ENCODE measurements at regions of chr4 and their contacts with region 1.

Region 1: DNA sequence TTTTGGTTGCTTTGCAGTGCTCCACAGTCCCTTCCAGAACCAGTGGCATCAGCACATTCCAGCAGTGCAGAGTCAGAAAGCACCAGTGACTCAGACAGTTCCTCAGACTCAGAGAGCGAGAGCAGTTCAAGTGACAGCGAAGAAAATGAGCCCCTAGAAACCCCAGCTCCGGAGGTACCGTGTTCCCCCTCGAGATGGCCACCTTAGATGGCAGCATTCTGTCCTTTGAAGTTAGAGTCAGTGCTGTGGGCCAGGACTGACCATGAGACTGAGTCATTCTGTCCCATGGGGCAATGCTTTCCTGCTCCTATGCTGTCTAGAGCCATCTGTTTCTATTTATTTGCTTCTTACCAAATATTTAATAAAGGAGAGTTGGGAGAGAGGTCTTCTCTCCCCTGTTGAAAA is 112.3 kb downstream of the KLHL8 start:
- DNase-seq: peak; percentile 59
- H3K4me3 ChIP-seq: no peak overlapping the region
- H3K27ac ChIP-seq: peak overlapping the region; percentile 18
- H3K4me1 ChIP-seq: peaks cover 27% of the 10 kb centered on the region
- H3K27me3 ChIP-seq: no peaks in the 10 kb centered on the region
- CTCF ChIP-seq: no peak

Region 2: GRCh38 chr4:86927843-86928395 is 180.2 kb before region 1 on chr4:
- CTCF ChIA-PET with region 1: no interaction called
- dilution Hi-C with region 1: loop called (anchors 5 kb)
- in situ Hi-C with region 1: no loop called
- intact Hi-C with region 1: no loop called
- DNase-seq: peak; percentile 99
- H3K4me3 ChIP-seq: no peak overlapping the region
- H3K27ac ChIP-seq: peak overlapping the region; percentile 97
- H3K4me1 ChIP-seq: peaks cover 43% of the 10 kb centered on the region
- H3K27me3 ChIP-seq: no peaks in the 10 kb centered on the region
- CTCF ChIP-seq: no peak

Region 3: GRCh38 chr4:87038837-87039615 is 69.1 kb before region 1 on chr4:
- CTCF ChIA-PET with region 1: no interaction called
- dilution Hi-C with region 1: loop called (anchors 5 kb)
- in situ Hi-C with region 1: no loop called
- intact Hi-C with region 1: no loop called
- DNase-seq: peak; percentile 89
- H3K4me3 ChIP-seq: peak overlapping the region in 1 of 3 experiments; percentile 2
- H3K27ac ChIP-seq: peak overlapping the region; percentile 89
- H3K4me1 ChIP-seq: peaks cover 42% of the 10 kb centered on the region
- H3K27me3 ChIP-seq: no peaks in the 10 kb centered on the region
- CTCF ChIP-seq: no peak

Region 4: GRCh38 chr4:87060957-87061356 is 47.2 kb before region 1 on chr4:
- CTCF ChIA-PET with region 1: no interaction called
- dilution Hi-C with region 1: no loop called
- in situ Hi-C with region 1: no loop called
- intact Hi-C with region 1: loop called (anchors 1 kb)
- DNase-seq: peak; percentile 93
- H3K4me3 ChIP-seq: no peak overlapping the region
- H3K27ac ChIP-seq: peak overlapping the region; percentile 89
- H3K4me1 ChIP-seq: peaks cover 27% of the 10 kb centered on the region
- H3K27me3 ChIP-seq: no peaks in the 10 kb centered on the region
- CTCF ChIP-seq: no peak

Measured in mammary epithelial cell (primary cell).